H1 (cell line): ENCODE measurements at regions of chr1 and their contacts with region 1.

Region 1: DNA sequence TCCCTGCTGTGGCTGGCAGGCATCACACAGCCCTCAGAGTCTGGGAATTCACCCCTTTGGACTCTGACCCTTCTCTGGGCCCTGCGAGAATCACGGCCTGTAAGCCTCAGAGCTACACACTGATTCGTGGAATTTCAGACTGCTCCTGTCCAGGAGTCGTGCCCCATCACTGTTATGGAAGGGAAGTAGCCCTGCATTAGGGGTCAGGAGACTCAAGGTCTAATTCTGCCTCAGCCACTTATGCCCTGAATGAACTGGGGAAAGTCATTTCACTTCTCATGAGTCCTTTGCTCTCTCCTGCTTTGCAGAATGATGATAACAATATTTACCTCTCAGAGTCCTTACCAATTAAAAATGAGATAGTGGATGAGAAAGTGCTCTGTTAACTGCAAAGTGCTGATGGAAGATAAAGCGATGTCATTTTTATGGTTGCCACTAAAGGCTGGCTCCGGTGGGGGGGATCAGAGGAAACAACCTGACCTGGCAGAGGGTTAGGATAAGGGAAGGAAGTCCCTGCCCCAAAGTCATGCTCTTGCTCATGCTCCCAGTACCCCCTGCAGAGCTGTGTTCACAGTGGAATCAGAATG is 148.6 kb upstream of the CD34 start:
- DNase-seq: no peak
- H3K4me3 ChIP-seq: no peak overlapping the region
- H3K27ac ChIP-seq: no peak overlapping the region
- H3K4me1 ChIP-seq: peaks cover 0 to 10% (median 5%) of the 10 kb centered on the region in 4 experiments; a peak in 6 of 7 replicates
- H3K27me3 ChIP-seq: no peaks in the 10 kb centered on the region
- CTCF ChIP-seq: no peak
- EP300 ChIP-seq: no peak
- POLR2A ChIP-seq: no peak
- RAD21 ChIP-seq: no peak

Region 2: GRCh38 chr1:207944571-207944970 is 114.9 kb before region 1 on chr1:
- CTCF ChIA-PET with region 1: no interaction called
- POLR2A ChIA-PET with region 1: no interaction called
- DNase-seq: no peak
- H3K4me3 ChIP-seq: no peak overlapping the region
- H3K27ac ChIP-seq: no peak overlapping the region
- H3K4me1 ChIP-seq: no peaks in the 10 kb centered on the region
- H3K27me3 ChIP-seq: no peaks in the 10 kb centered on the region
- CTCF ChIP-seq: no peak
- EP300 ChIP-seq: no peak
- POLR2A ChIP-seq: no peak
- RAD21 ChIP-seq: no peak

Region 3: GRCh38 chr1:208036109-208036808 is 23.2 kb before region 1 on chr1:
- CTCF ChIA-PET with region 1: interaction called, 16 read pairs
- POLR2A ChIA-PET with region 1: no interaction called
- DNase-seq: no peak
- H3K4me3 ChIP-seq: no peak overlapping the region
- H3K27ac ChIP-seq: no peak overlapping the region
- H3K4me1 ChIP-seq: peaks cover 0 to 3% (median 0%) of the 10 kb centered on the region in 4 experiments; a peak in 1 of 7 replicates
- H3K27me3 ChIP-seq: no peaks in the 10 kb centered on the region
- CTCF ChIP-seq: peak; percentile 34 to 69 (median 55)
- EP300 ChIP-seq: no peak
- POLR2A ChIP-seq: no peak
- RAD21 ChIP-seq: peak; percentile 60 to 68

Region 4: GRCh38 chr1:208081972-208082371 is 22.5 kb after region 1 on chr1:
- CTCF ChIA-PET with region 1: interaction called, 10 read pairs
- POLR2A ChIA-PET with region 1: no interaction called
- DNase-seq: no peak
- H3K4me3 ChIP-seq: no peak overlapping the region
- H3K27ac ChIP-seq: no peak overlapping the region
- H3K4me1 ChIP-seq: peaks cover 4 to 14% (median 7%) of the 10 kb centered on the region in 4 experiments; a peak in 6 of 7 replicates
- H3K27me3 ChIP-seq: peaks cover 0 to 4% (median 0%) of the 10 kb centered on the region in 4 experiments; a peak in 3 of 7 replicates
- CTCF ChIP-seq: peak in 1 of 3 experiments; percentile 8; a peak in 1 of 4 replicates
- EP300 ChIP-seq: no peak
- POLR2A ChIP-seq: no peak
- RAD21 ChIP-seq: 0 out of 4 replicates have a peak, but pooled peaks of 1 of the 2 experiments have one; percentile 23

Region 5: DNA sequence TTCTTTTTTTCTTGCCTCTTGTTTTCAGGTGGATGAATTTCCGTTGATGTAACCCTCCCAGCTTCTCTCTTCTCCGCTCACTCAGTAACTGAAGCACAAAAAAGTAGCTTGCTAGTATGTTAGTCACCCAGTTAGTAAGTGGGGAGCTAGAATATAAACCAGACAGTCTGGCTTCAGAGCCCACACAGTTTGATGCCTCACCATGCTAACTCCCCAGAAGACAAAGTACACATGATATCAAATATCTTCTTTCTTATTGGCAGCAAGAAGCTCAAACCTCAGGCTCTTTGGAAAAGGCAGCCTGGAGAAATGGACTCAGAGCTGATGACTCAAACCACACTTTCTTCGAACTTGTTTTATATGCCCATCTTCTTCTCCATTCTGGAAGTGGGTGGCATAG is 372.2 kb after region 1 on chr1:
- CTCF ChIA-PET with region 1: no interaction called
- POLR2A ChIA-PET with region 1: no interaction called
- DNase-seq: no peak
- H3K4me3 ChIP-seq: no peak overlapping the region
- H3K27ac ChIP-seq: no peak overlapping the region
- H3K4me1 ChIP-seq: peaks cover 2 to 8% (median 4%) of the 10 kb centered on the region in 4 experiments; a peak in 4 of 7 replicates
- H3K27me3 ChIP-seq: no peaks in the 10 kb centered on the region
- CTCF ChIP-seq: no peak
- EP300 ChIP-seq: no peak
- POLR2A ChIP-seq: no peak
- RAD21 ChIP-seq: no peak